ENCODE measurements at regions of chr1 and their contacts with region 1.

Region 1: GRCh38 chr1:226121587-226122400 is 59.3 kb downstream of the H3-3A start:
- DNase-seq: peak; percentile 60
- H3K4me3 ChIP-seq: peak overlapping the region; percentile 53 to 54
- H3K27ac ChIP-seq: peak overlapping the region; percentile 83 to 85
- H3K4me1 ChIP-seq: no peaks in the 10 kb centered on the region
- H3K27me3 ChIP-seq: no peaks in the 10 kb centered on the region
- CTCF ChIP-seq: peak; percentile 72 to 99 (median 95)
- POLR2A ChIP-seq: no peak

Region 2: DNA sequence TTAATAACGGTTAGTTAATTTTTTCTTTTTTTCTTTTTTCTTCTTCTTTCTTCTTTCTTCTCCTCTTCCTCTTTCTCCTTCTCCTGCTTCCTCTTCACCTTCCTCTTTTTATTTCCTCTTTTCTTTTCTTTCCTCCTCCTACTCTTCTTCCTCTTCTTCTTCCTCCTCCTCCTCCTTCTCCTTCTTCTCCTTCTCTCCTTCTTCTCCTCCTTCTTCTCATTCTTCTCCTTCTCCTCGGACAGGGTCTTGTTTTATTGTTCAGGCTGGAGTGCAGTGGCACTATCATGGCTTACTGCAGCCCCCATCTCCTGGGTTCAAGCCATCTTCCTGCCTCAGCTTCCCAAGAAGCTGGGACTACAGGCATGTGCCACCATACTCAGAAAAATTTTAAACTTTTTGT is 78.2 kb after region 1 on chr1:
- intact Hi-C with region 1: loop called (anchors 2 kb)
- DNase-seq: no peak
- H3K4me3 ChIP-seq: no peak overlapping the region
- H3K27ac ChIP-seq: no peak overlapping the region
- H3K4me1 ChIP-seq: no peaks in the 10 kb centered on the region
- H3K27me3 ChIP-seq: no peaks in the 10 kb centered on the region
- CTCF ChIP-seq: no peak
- POLR2A ChIP-seq: no peak